ENCODE measurements at regions of chr6 and their contacts with region 1.

Region 1: DNA sequence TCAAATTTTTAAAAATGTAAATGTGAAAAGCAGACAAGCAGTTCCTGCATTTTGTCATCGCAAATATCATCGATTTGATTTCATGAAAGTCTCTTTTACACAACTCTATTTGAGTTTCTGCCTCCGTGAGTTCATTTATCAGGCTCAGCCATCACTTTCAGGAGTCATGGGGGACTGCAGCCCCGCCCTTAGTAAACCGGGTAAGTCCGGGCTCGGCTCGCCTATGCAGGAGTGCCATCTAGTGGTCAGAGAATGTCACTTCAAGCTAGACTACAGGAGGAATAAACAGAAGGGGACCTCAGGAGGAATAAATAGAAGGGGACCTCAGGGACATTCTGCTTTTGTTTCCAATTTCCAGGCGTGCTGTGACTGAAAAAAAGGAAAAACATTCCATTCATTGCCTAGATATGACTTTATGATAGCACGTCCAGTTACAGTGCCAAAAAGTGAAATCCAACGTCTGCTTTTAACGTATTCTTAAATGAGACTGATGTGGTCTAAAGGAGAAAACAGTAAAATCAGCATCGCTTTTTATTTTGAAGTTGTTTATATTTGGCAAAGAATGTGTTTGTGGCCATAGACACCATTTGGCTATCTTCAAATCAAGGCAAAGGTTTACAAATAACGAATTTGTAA is 333.9 kb downstream of the HACE1 start:
- DNase-seq: no peak
- H3K4me3 ChIP-seq: peak overlapping the region; percentile 44
- CTCF ChIP-seq: peak; percentile 81

Region 2: GRCh38 chr6:104537180-104537579 is 11.4 kb after region 1 on chr6:
- CTCF ChIA-PET with region 1: interaction called, 23 read pairs
- POLR2A ChIA-PET with region 1: no interaction called
- DNase-seq: peak; percentile 52
- H3K4me3 ChIP-seq: no peak overlapping the region
- CTCF ChIP-seq: no peak

Region 3: GRCh38 chr6:104771258-104771832 is 245.6 kb after region 1 on chr6:
- CTCF ChIA-PET with region 1: interaction called, 10 read pairs
- POLR2A ChIA-PET with region 1: no interaction called
- DNase-seq: no peak
- H3K4me3 ChIP-seq: no peak overlapping the region
- CTCF ChIP-seq: no peak